ENCODE measurements at regions of chr1 and their contacts with region 1.

Region 1: DNA sequence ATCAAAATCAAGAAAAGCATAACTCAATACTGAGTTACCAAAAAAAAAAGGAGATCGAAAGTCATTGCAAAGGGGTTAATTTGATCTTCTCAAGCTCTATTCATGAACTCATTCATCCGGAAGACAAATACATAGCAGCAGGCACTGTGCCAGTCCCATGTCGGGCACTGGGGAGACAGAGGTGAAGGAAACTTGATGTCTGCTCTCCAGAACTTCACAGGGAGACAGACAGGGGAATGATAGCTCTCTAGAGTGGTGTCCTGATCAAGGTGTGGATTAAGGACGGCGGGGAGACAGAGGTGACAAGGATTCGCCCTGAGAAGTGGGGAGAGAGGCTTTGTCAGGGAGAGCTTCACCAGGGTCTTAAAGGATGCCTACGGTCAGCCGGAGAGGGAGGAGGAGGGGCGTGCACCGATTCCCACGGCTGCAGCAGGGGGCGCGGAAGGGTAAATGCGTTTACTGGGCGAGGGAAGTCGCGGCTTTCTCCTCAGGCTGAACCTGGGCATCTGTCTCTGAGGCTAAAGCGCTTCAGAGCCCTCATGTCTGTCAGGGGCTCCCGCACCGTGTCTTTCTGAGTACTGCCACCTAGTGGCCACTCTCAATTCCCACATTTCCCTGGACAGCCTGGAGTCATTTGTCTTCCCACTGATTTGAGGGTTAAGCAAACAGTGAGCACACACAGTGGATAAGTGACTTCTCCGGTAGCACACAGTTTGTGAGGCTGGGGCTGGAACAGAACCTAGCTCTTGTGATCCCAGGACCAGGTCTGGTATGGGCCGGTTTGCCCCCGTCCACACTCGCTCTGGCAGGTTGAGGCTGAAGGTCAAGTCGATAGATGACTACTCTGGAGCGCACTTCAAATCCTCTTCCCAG is 152.8 kb downstream of the TENT5C start:
- DNase-seq: peak; percentile 71 to 87 (median 78)
- ATAC-seq: peak; percentile 75 to 88 (median 80)
- H3K4me3 ChIP-seq: peak overlapping the region; percentile 8 to 39 (median 34)
- H3K27ac ChIP-seq: peak overlapping the region in 2 of 4 donors; percentile 51 to 56
- H3K4me1 ChIP-seq: peaks cover 6 to 31% (median 14%) of the 10 kb centered on the region in 3 donors
- H3K27me3 ChIP-seq: no peaks in the 10 kb centered on the region
- CTCF ChIP-seq: peak; percentile 81 to 91 (median 86)

Region 2: DNA sequence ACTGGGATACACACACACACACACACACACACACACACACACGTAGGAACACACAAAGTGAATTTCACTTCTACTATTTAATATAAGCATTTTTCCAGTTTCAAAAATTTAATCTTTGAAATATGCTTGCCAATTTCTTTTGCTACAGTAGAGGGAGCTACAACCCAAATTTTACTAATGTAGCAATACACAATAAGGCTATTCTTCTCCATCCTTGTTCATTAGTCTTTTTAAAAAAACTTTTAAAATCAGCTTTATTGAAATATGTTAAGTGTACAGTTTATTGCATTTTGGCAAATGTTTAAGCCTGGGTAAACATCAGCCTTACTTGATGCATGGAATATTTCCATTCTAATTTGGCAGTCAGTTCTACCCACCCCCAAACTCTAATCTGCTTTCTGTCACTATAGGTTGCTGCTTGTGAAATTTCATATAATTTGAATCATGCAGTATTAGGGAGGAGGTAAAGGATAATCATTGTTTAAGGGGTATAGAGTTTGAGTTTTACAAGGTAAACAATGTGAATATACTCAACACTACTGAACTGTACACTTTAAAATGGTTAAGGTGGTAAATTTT is 245.8 kb before region 1 on chr1:
- intact Hi-C with region 1: loop called in 1 of 3 experiments (anchors 5 kb)
- DNase-seq: no peak
- ATAC-seq: peak in 3 of 4 donors; percentile 77 to 81 (median 80)
- H3K4me3 ChIP-seq: no peak overlapping the region
- H3K27ac ChIP-seq: no peak overlapping the region
- H3K4me1 ChIP-seq: peaks cover 0 to 3% (median 0%) of the 10 kb centered on the region in 3 donors
- H3K27me3 ChIP-seq: no peaks in the 10 kb centered on the region
- CTCF ChIP-seq: peak in 2 of 4 donors; percentile 36

Region 3: GRCh38 chr1:117534995-117535467 is 223.6 kb before region 1 on chr1:
- intact Hi-C with region 1: loop called in 2 of 3 experiments (anchors 10 kb)
- DNase-seq: peak in 4 of 6 donors; percentile 61 to 77 (median 68)
- ATAC-seq: peak; percentile 79 to 95 (median 92)
- H3K4me3 ChIP-seq: no peak overlapping the region
- H3K27ac ChIP-seq: peak overlapping the region in 1 of 4 donors; percentile 20
- H3K4me1 ChIP-seq: peaks cover 0 to 7% (median 0%) of the 10 kb centered on the region in 3 donors
- H3K27me3 ChIP-seq: no peaks in the 10 kb centered on the region
- CTCF ChIP-seq: peak; percentile 44 to 60 (median 48)

Region 4: DNA sequence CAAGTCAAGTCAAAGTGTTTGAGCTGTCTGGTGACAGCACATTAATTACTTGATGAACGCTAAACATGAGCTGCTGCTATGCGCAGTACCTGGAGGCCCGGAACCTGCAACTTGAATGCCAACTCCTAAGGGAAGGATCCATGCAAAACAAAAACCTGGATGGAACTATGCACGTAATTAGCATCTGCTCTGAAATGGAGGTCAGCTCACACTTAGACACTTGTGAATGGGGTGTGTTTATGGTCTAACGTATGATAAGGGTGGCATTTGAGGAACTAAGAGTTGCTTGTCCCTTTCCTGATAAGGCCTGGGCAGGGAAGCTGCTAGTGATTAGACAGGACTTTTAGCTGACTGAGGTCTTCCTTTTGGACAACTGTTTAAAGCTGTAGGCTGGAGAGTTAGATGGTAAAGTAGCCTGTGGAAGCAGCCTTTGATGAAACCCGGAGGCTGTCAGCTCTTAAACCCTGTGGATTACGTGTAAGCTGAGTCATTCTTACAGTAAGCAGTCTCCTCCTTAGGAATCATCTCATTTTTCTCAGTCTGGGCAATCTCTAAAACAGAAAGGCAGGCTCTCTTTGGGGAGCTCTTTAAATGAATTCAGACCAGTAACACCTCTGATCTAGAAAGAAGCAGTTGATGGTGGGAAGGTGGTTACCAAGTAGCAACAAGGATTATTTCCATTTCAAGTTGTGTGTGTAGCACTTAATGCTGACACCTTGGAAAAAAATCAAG is 146.0 kb before region 1 on chr1:
- intact Hi-C with region 1: loop called in 1 of 3 experiments (anchors 10 kb)
- DNase-seq: peak in 1 of 6 donors; percentile 11
- ATAC-seq: peak; percentile 9 to 41 (median 34)
- H3K4me3 ChIP-seq: no peak overlapping the region
- H3K27ac ChIP-seq: peak overlapping the region; percentile 29 to 91 (median 61)
- H3K4me1 ChIP-seq: peaks cover 16 to 62% (median 38%) of the 10 kb centered on the region in 3 donors
- H3K27me3 ChIP-seq: no peaks in the 10 kb centered on the region
- CTCF ChIP-seq: no peak

Region 5: GRCh38 chr1:117895482-117896114 is 136.9 kb after region 1 on chr1:
- intact Hi-C with region 1: loop called in 1 of 3 experiments (anchors 10 kb)
- DNase-seq: peak in 5 of 6 donors; percentile 48 to 77 (median 58)
- ATAC-seq: peak; percentile 60 to 81 (median 77)
- H3K4me3 ChIP-seq: no peak overlapping the region
- H3K27ac ChIP-seq: peak overlapping the region in 1 of 4 donors; percentile 8
- H3K4me1 ChIP-seq: peaks cover 33 to 50% (median 41%) of the 10 kb centered on the region in 3 donors
- H3K27me3 ChIP-seq: no peaks in the 10 kb centered on the region
- CTCF ChIP-seq: peak in 3 of 4 donors; percentile 50 to 74 (median 72)

Region 6: GRCh38 chr1:118118469-118118868 is 359.8 kb after region 1 on chr1:
- intact Hi-C with region 1: no loop called
- DNase-seq: peak in 5 of 6 donors; percentile 38 to 65 (median 60)
- ATAC-seq: peak; percentile 85 to 91 (median 86)
- H3K4me3 ChIP-seq: no peak overlapping the region
- H3K27ac ChIP-seq: peak overlapping the region in 2 of 4 donors; percentile 11 to 53
- H3K4me1 ChIP-seq: peaks cover 30 to 52% (median 51%) of the 10 kb centered on the region in 3 donors
- H3K27me3 ChIP-seq: no peaks in the 10 kb centered on the region
- CTCF ChIP-seq: no peak

Measured in pancreas (tissue), 10 donors.